H1 (cell line): ENCODE measurements at regions of chr1 and their contacts with region 1.

Region 1: DNA sequence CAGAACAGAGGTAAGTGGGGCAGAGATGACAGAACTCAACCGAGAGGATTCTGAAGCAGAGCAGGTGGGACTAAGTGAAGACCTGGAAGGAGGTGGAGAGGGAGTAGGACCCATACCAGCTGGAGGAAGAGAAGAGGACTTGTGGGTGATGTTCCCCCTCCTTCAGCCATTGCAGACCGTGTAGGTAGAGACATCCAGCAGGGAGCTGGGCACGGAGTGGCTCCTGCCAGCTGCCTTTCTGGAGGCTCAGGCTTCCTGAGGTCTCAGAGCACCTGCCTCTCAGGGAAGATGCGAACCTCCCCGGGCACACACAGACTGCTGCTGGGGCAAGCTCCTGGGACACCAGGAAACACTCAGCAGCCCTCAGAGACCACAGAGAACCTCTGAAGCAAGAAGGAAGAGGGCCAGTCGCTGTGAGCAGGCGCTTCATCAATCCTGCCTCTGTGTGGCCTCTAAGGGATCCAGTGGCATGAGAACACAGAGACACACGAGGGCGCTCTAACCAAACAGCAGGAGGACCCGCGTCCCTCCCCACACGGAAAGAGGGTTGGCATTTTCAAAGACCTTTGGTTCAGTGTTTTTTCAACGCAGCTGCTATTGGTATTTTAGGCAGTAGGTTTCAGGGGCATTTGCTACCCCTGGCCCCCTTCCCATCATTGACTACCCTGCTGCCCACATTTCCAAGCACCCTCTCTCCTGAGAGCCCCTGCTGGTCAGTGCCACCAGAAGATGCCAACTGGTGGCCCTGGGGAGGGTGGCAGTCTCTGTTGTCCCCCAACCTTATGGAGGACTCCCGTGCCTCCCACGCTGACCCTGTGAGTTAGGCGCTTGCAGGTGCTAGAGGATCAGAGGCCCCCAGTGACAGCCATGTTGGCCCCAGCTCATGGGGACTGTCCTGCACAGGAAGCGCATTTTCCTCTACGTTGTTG is 89.6 kb upstream of the EDN2 start:
- DNase-seq: peak; percentile 33 to 86
- H3K4me3 ChIP-seq: no peak overlapping the region
- H3K27ac ChIP-seq: no peak overlapping the region
- H3K4me1 ChIP-seq: no peaks in the 10 kb centered on the region; a peak in 2 of 7 replicates
- H3K27me3 ChIP-seq: no peaks in the 10 kb centered on the region; a peak in 1 of 7 replicates
- CTCF ChIP-seq: peak; percentile 87 to 97 (median 94)
- EP300 ChIP-seq: no peak
- POLR2A ChIP-seq: no peak
- RAD21 ChIP-seq: peak; percentile 98 to 99

Region 2: GRCh38 chr1:41404308-41404761 is 169.7 kb before region 1 on chr1:
- CTCF ChIA-PET with region 1: no interaction called
- POLR2A ChIA-PET with region 1: no interaction called
- DNase-seq: peak in 1 of 2 experiments; percentile 76
- H3K4me3 ChIP-seq: peak overlapping the region in 1 of 4 experiments; percentile 25; a peak in 1 of 8 replicates
- H3K27ac ChIP-seq: no peak overlapping the region
- H3K4me1 ChIP-seq: peaks cover 4 to 27% (median 14%) of the 10 kb centered on the region in 4 experiments
- H3K27me3 ChIP-seq: peaks cover 0 to 5% (median 2%) of the 10 kb centered on the region in 4 experiments; a peak in 4 of 7 replicates
- CTCF ChIP-seq: no peak
- EP300 ChIP-seq: no peak
- POLR2A ChIP-seq: no peak
- RAD21 ChIP-seq: no peak

Region 3: GRCh38 chr1:41560496-41560895 is 13.6 kb before region 1 on chr1:
- CTCF ChIA-PET with region 1: interaction called, 10 read pairs
- POLR2A ChIA-PET with region 1: no interaction called
- DNase-seq: no peak
- H3K4me3 ChIP-seq: no peak overlapping the region
- H3K27ac ChIP-seq: no peak overlapping the region
- H3K4me1 ChIP-seq: no peaks in the 10 kb centered on the region
- H3K27me3 ChIP-seq: no peaks in the 10 kb centered on the region; a peak in 3 of 7 replicates
- CTCF ChIP-seq: no peak
- EP300 ChIP-seq: no peak
- POLR2A ChIP-seq: no peak
- RAD21 ChIP-seq: no peak

Region 4: GRCh38 chr1:41598325-41598724 is 24.3 kb after region 1 on chr1:
- CTCF ChIA-PET with region 1: interaction called, 20 read pairs
- POLR2A ChIA-PET with region 1: no interaction called
- DNase-seq: no peak
- H3K4me3 ChIP-seq: no peak overlapping the region
- H3K27ac ChIP-seq: no peak overlapping the region
- H3K4me1 ChIP-seq: no peaks in the 10 kb centered on the region
- H3K27me3 ChIP-seq: no peaks in the 10 kb centered on the region
- CTCF ChIP-seq: no peak
- EP300 ChIP-seq: no peak
- POLR2A ChIP-seq: no peak
- RAD21 ChIP-seq: no peak

Region 5: DNA sequence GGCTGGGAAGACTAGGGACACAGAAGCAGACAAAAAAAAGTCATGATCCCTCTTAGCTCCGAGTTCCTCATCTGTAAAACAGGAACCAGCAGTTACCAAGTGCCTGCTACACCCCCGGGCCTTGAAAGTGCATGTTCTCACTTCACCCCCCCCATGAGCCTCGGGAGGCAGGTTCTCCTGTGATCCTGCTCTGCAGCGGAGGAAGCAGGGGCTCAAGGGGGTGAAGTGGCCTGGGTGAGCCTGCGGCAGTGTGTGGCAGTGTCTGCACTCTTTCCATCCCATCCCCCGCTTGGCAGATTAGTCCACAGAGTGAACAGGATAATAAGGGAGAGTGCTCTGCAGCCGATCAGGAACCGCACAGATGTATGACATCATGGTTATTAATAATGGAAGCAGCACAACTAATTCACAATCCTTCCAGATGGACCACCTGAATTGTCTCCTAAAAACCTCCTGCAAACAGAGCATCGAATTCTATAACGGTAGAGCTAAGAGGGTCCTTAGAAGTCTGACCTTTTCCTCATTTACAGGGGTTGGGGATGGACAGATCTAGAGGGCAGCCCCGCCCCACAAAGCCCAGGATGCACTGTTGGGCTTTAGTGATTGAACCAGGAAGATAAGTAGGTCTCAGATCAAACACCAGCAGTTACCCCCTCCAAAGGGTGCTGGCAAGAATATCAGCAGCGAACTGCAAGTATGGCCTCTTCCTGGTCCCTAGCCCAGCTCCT is 84.5 kb after region 1 on chr1:
- CTCF ChIA-PET with region 1: interaction called, 12 read pairs
- POLR2A ChIA-PET with region 1: no interaction called
- DNase-seq: no peak
- H3K4me3 ChIP-seq: no peak overlapping the region
- H3K27ac ChIP-seq: no peak overlapping the region
- H3K4me1 ChIP-seq: peaks cover 0 to 8% (median 3%) of the 10 kb centered on the region in 4 experiments; a peak in 5 of 7 replicates
- H3K27me3 ChIP-seq: peaks cover 17 to 36% (median 28%) of the 10 kb centered on the region in 4 experiments
- CTCF ChIP-seq: no peak
- EP300 ChIP-seq: no peak
- POLR2A ChIP-seq: no peak
- RAD21 ChIP-seq: no peak

Region 6: GRCh38 chr1:41713557-41714327 is 139.7 kb after region 1 on chr1:
- CTCF ChIA-PET with region 1: no interaction called
- POLR2A ChIA-PET with region 1: no interaction called
- DNase-seq: peak in 1 of 2 experiments; percentile 31
- H3K4me3 ChIP-seq: no peak overlapping the region
- H3K27ac ChIP-seq: no peak overlapping the region
- H3K4me1 ChIP-seq: peaks cover 0 to 7% (median 3%) of the 10 kb centered on the region in 4 experiments; a peak in 4 of 7 replicates
- H3K27me3 ChIP-seq: no peaks in the 10 kb centered on the region; a peak in 1 of 7 replicates
- CTCF ChIP-seq: no peak
- EP300 ChIP-seq: 0 out of 3 replicates have a peak, but pooled peaks of 1 of the 2 experiments have one; percentile 31
- POLR2A ChIP-seq: no peak
- RAD21 ChIP-seq: no peak

Region 7: DNA sequence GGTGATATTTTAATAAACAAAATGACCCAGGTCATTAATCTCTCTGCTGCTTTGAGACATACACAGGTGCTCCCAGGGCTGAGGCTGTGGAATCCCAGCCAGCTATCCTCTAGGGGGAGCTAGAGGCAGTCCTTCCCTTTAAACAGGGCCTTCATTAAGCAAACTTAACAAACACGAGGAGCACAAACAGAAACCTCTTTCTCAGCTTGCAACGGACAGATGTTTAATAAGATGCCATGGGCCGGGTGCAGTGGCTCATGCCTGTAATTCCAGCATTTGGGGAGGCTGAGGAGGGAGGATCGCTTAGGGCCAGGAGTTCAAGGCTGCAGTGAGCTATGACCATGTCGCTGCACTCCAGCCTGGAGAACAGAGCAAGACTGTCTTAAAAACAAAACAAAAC is 238.0 kb after region 1 on chr1:
- CTCF ChIA-PET with region 1: interaction called, 10 read pairs
- POLR2A ChIA-PET with region 1: no interaction called
- DNase-seq: peak; percentile 50 to 75
- H3K4me3 ChIP-seq: no peak overlapping the region
- H3K27ac ChIP-seq: no peak overlapping the region
- H3K4me1 ChIP-seq: peaks cover 0 to 3% (median 0%) of the 10 kb centered on the region in 4 experiments; a peak in 2 of 7 replicates
- H3K27me3 ChIP-seq: no peaks in the 10 kb centered on the region
- CTCF ChIP-seq: peak; percentile 66 to 83 (median 74)
- EP300 ChIP-seq: no peak
- POLR2A ChIP-seq: no peak
- RAD21 ChIP-seq: peak; percentile 72 to 86